ENCODE measurements at regions of chr19 and their contacts with region 1.

Region 1: GRCh38 chr19:12994701-12995595 is at the start of gene NFIX:
- DNase-seq: peak; percentile 81 to 92
- ATAC-seq: peak; percentile 31
- H3K4me3 ChIP-seq: peak within 1 kb of the TSS; percentile 73 to 80
- H3K27ac ChIP-seq: peak within 1 kb of the TSS; percentile 76 to 98
- H3K4me1 ChIP-seq: no peaks in the 10 kb centered on the region
- H3K27me3 ChIP-seq: no peaks in the 10 kb centered on the region
- total RNA-seq, gene NFIX: 184 to 327 TPM

Region 2: GRCh38 chr19:12974301-12975220 is 20.4 kb before region 1 on chr19:
- intact Hi-C with region 1: no loop called
- DNase-seq: no peak
- ATAC-seq: no peak
- H3K4me3 ChIP-seq: no peak overlapping the region
- H3K27ac ChIP-seq: no peak overlapping the region
- H3K4me1 ChIP-seq: no peaks in the 10 kb centered on the region
- H3K27me3 ChIP-seq: no peaks in the 10 kb centered on the region

Region 3: GRCh38 chr19:13014101-13014920 is 19.4 kb after region 1 on chr19:
- intact Hi-C with region 1: loop called in 1 of 2 experiments (anchors 2 kb)
- DNase-seq: no peak
- ATAC-seq: no peak
- H3K4me3 ChIP-seq: peak overlapping the region; percentile 40 to 56
- H3K27ac ChIP-seq: peak overlapping the region; percentile 87 to 90
- H3K4me1 ChIP-seq: no peaks in the 10 kb centered on the region
- H3K27me3 ChIP-seq: no peaks in the 10 kb centered on the region

Region 4: DNA sequence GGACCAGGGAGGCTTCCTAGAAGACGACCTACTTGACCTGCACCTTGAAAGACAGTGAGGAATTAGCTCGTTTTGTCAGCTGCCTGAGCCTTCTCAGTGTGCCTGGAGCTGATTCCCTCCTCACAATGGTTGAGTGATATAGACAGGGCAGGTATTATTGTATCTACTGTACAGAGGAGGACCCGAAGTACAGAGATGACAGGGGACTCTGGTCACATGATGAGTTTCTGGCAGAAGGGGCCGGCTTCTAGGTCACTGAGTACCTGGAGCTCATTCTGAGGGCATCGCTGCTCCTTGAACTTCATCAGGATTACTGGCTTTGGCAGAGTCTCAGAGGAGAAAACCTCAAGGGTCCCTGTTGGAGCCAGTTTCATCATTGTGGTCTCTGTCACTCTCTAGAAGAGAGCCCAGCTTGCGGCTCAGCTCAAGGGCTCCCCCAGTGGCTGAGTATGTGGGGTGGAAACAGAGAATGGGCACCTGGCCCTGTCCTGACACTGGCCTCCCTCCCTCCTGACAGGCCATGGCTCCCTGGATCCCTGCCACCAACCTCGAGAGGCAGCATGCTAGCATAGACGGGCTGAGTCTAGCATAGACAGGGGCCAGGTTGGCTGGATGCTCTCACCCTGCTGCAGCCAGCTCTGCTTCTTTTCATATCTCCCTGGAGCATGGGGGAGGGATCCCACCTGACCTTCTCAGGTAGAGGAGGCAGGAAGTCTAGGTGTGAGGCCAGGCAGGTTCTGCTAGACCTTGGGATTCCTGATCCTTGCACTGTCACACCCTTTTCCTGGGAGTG is 39.1 kb after region 1 on chr19:
- intact Hi-C with region 1: loop called in 1 of 2 experiments (anchors 5 kb)
- DNase-seq: peak; percentile 83 to 89
- ATAC-seq: peak; percentile 65
- H3K4me3 ChIP-seq: no peak overlapping the region
- H3K27ac ChIP-seq: peak overlapping the region; percentile 44 to 98
- H3K4me1 ChIP-seq: peaks cover 11 to 13% of the 10 kb centered on the region in 2 donors
- H3K27me3 ChIP-seq: no peaks in the 10 kb centered on the region

Region 5: DNA sequence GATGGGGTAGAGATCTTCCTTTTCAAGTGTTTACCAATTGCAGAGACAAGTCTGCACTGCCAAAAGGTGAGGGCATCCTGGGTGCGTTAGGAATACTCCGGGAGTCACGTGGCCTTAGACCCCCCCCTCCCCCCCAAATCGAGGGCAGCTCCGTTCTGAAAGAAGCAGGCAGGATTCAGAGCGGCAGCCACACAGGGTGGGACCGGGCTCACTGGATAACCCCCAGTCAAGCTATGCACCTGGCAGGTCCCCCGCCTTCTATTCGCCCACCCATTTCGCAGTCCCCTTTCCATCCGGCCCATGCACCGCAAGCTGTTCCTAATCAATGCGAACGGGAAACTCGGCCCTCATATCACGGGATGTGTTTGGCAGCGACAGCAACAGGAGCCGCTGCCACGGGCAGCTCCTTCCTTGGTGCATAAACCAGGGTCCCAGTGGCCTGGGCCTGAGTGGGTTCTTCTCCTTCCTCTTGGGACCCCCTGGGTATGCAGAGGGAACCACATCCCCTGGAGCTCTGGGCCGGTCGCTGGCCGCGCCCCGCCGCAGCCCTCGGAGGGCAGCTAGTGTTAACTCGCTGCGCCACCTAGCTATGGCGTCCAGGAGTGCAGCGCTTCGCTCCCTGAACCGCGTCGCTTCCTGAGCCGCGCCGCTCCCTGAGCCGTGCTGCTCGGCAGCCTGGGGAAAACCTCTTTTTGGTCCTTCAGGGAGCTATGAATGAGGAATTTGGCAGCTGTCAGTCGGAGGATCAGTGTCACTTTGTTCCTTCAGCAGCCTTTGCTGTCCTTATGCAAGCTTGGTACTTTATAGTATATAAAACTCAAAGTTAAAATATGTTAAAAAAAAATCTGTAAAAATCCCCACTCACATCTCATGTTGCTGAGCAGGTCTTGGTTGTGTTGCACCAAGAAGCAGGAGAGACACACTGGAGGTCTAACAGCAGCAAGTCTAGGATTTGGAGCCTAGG is 66.3 kb after region 1 on chr19:
- intact Hi-C with region 1: loop called (anchors 2 to 5 kb)
- DNase-seq: peak; percentile 92 to 97
- ATAC-seq: peak; percentile 90
- H3K4me3 ChIP-seq: no peak overlapping the region
- H3K27ac ChIP-seq: peak overlapping the region; percentile 33 to 74
- H3K4me1 ChIP-seq: peaks cover 2 to 6% of the 10 kb centered on the region in 2 donors
- H3K27me3 ChIP-seq: no peaks in the 10 kb centered on the region

Region 6: DNA sequence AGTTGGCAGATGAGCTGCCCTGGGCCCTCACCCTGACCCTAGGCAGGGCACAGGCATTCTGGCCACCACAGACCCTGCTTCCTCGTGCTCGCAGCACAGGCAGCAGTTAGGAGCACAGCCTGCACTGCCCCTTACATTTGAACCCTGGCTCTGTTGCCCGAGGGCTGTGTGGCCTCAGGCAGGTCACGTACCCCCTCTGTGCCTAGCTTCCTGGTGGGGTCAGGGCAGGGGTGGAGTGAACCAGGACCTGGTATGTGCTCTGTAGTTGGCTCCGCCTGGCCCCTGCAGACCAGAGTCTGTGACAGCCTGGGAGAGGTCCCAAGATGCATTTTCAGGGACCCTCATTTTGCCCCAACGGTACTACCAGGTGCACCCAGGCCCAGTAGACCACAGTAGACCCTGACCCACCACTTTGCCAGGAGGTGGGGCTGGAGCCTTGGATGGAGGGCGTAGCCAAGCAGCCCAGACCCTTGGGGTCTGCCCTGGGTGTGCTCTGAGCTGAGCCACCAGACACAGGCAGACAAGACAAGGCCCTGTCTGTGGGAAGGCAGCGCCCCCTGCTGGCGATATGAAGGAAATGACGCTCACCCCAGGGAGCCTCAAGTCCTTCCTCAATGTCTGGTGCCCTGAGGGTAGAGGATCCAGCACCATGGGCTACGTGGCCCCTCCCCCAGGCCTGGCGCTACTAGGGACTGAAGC is 98.6 kb after region 1 on chr19:
- intact Hi-C with region 1: loop called in 1 of 2 experiments (anchors 5 kb)
- DNase-seq: peak; percentile 90 to 93
- ATAC-seq: peak; percentile 73
- H3K4me3 ChIP-seq: no peak overlapping the region
- H3K27ac ChIP-seq: peak overlapping the region; percentile 49 to 59
- H3K4me1 ChIP-seq: peaks cover 0 to 3% of the 10 kb centered on the region in 2 donors
- H3K27me3 ChIP-seq: no peaks in the 10 kb centered on the region